ENCODE measurements at regions of chr19 and their contacts with region 1.

Region 1: DNA sequence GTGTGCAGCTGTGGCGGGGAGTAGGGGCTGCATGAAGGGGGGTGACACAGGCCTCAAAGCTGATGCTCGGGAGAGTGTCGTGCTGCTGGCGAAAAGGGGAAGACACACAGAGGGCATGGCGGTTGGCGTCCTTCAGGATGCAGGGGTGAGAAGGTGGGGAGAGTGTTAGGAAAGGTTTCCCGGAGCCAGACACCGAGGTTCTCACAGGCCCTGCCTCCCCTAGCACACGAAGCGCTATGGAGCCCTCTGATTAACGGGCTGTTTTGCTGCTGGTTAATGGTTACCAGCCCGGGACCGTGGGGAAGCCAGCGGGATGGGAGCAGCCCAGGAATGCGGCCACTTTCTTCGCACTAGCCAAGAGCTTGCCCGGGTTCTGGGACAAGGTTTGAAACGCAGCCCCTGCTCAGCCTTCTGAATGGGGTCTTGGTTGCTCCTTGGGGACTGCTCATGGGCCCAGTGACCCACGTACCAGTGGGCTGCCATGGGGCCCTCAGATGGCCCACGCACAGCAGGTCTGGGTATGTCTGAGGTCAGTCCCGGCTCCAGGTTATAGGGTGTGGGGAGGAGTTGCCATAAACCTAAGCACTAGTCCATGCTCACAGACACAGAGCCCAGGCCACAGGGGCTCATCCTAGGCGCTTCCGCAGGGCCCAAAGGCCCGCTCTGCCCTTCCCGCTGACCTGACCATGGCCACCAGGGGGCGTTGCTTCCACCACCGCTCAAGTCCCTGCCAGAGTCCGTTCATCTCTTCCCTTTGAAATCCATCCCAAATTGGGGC is 31.3 kb upstream of the ISYNA1 start:
- DNase-seq: peak; percentile 77
- H3K4me3 ChIP-seq: no peak overlapping the region
- H3K27ac ChIP-seq: no peak overlapping the region
- H3K4me1 ChIP-seq: peaks cover 8% of the 10 kb centered on the region
- H3K27me3 ChIP-seq: no peaks in the 10 kb centered on the region
- CTCF ChIP-seq: peak; percentile 84

Region 2: GRCh38 chr19:18322759-18323460 is 146.3 kb before region 1 on chr19 and contains the start of gene LSM4:
- CTCF ChIA-PET with region 1: no interaction called
- POLR2A ChIA-PET with region 1: interaction called, 11 read pairs
- intact Hi-C with region 1: no loop called
- DNase-seq: peak; percentile 99
- H3K4me3 ChIP-seq: peak within 1 kb of the TSS; percentile 70
- H3K27ac ChIP-seq: peak within 1 kb of the TSS; percentile 92
- H3K4me1 ChIP-seq: peaks cover 11% of the 10 kb centered on the region
- H3K27me3 ChIP-seq: no peaks in the 10 kb centered on the region
- CTCF ChIP-seq: no peak
- total RNA-seq, gene LSM4: 252 and 262 TPM in 2 replicates

Region 3: GRCh38 chr19:18453269-18454024 is 15.8 kb before region 1 on chr19:
- CTCF ChIA-PET with region 1: no interaction called
- POLR2A ChIA-PET with region 1: no interaction called
- intact Hi-C with region 1: no loop called
- DNase-seq: no peak
- H3K4me3 ChIP-seq: no peak overlapping the region
- H3K27ac ChIP-seq: no peak overlapping the region
- H3K4me1 ChIP-seq: peaks cover 4% of the 10 kb centered on the region
- H3K27me3 ChIP-seq: no peaks in the 10 kb centered on the region
- CTCF ChIP-seq: no peak

Region 4: GRCh38 chr19:18589380-18590272 is 120.4 kb after region 1 on chr19:
- CTCF ChIA-PET with region 1: interaction called, 3 read pairs
- POLR2A ChIA-PET with region 1: no interaction called
- intact Hi-C with region 1: loop called (anchors 10 kb)
- DNase-seq: peak; percentile 93
- H3K4me3 ChIP-seq: peak overlapping the region; percentile 83
- H3K27ac ChIP-seq: peak overlapping the region; percentile 96
- H3K4me1 ChIP-seq: peaks cover 40% of the 10 kb centered on the region
- H3K27me3 ChIP-seq: no peaks in the 10 kb centered on the region
- CTCF ChIP-seq: no peak

Region 5: DNA sequence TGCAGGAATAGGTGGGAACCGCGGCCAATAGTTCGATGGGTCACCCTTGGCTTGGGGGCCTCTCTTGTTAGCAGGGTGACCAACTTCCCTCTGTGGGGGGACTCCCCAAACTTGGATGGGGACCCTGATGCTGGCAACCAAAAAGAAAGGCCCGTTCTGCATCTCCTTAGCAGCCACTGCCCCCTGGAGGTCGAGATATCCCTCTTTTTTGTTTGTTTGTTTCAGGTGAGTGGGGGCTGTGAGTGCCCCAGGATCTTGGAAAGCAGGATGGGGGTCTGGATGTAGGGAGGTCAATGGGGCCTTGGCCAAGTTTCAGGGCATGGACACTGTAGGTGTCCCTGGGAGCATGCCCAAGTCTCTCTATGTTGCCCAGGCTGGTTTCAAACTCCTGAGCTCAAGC is 206.5 kb after region 1 on chr19:
- CTCF ChIA-PET with region 1: interaction called, 3 read pairs
- POLR2A ChIA-PET with region 1: no interaction called
- intact Hi-C with region 1: loop called (anchors 5 kb)
- DNase-seq: peak; percentile 33
- H3K4me3 ChIP-seq: no peak overlapping the region
- H3K27ac ChIP-seq: no peak overlapping the region
- H3K4me1 ChIP-seq: peaks cover 10% of the 10 kb centered on the region
- H3K27me3 ChIP-seq: no peaks in the 10 kb centered on the region
- CTCF ChIP-seq: peak; percentile 55

Region 6: DNA sequence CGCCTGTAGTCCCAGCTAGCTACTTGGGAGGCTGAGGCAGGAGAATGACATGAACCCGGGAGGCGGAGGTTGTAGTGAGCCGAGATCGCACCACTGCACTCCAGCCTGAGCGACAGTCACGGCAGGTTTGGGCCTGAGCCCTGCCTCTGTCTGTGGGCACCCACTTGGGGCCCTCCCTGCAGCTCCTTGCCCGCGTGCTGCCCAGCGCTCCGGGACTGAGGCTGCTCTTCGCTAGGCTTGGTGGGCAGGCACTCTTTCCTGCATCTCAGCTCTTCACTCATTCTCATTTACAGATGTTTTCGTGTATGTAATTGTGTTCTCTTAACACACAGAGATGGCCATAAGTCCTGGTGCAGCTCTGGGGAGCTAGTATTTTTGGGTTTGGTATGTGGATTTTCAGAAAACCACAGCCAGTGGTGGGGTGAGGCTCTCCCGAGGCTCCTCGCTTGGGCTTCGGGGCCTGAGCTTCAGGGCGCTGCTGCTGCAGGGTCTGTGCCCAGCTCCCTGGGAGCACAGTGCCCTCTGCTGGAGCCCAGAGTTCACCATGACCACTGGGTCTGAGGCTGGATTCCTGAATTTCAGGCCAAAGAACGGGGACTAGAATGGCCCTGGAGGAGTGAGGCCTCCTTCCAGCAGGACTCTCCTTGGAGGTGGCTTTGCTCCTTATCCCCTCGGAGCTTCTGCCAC is 377.7 kb after region 1 on chr19:
- CTCF ChIA-PET with region 1: no interaction called
- POLR2A ChIA-PET with region 1: no interaction called
- intact Hi-C with region 1: loop called (anchors 5 kb)
- DNase-seq: peak; percentile 82
- H3K4me3 ChIP-seq: no peak overlapping the region
- H3K27ac ChIP-seq: peak overlapping the region; percentile 68
- H3K4me1 ChIP-seq: peaks cover 29% of the 10 kb centered on the region
- H3K27me3 ChIP-seq: no peaks in the 10 kb centered on the region
- CTCF ChIP-seq: peak; percentile 87

Region 7: GRCh38 chr19:18919086-18919899 is 450.0 kb after region 1 on chr19 and contains the starts of genes COPE and DDX49:
- CTCF ChIA-PET with region 1: no interaction called
- POLR2A ChIA-PET with region 1: no interaction called
- intact Hi-C with region 1: loop called (anchors 10 kb)
- DNase-seq: peak; percentile 100
- H3K4me3 ChIP-seq: peak within 1 kb of the TSS; percentile 77
- H3K27ac ChIP-seq: peak within 1 kb of the TSS; percentile 89
- H3K4me1 ChIP-seq: peaks cover 6% of the 10 kb centered on the region
- H3K27me3 ChIP-seq: no peaks in the 10 kb centered on the region
- CTCF ChIP-seq: no peak
- total RNA-seq, gene COPE: 244 and 267 TPM in 2 replicates
- total RNA-seq, gene DDX49: 61.1 and 68.8 TPM in 2 replicates

Region 8: GRCh38 chr19:18985257-18985656 is 516.0 kb after region 1 on chr19:
- CTCF ChIA-PET with region 1: no interaction called
- POLR2A ChIA-PET with region 1: no interaction called
- intact Hi-C with region 1: loop called (anchors 10 kb)
- DNase-seq: peak; percentile 87
- H3K4me3 ChIP-seq: no peak overlapping the region
- H3K27ac ChIP-seq: peak overlapping the region; percentile 39
- H3K4me1 ChIP-seq: peaks cover 20% of the 10 kb centered on the region
- H3K27me3 ChIP-seq: no peaks in the 10 kb centered on the region
- CTCF ChIP-seq: no peak

Measured in A673 (cell line).